ENCODE measurements at regions of chr3 and their contacts with region 1.

Region 1: GRCh38 chr3:77038468-77038929 is 1.4 kb upstream of the ROBO2 start:
- DNase-seq: peak; percentile 32 to 38
- ATAC-seq: peak; percentile 83 to 95 (median 93)
- H3K4me3 ChIP-seq: peak overlapping the region in 9 of 10 donors; percentile 14 to 57 (median 49)
- H3K27ac ChIP-seq: no peak overlapping the region
- H3K4me1 ChIP-seq: peaks cover 0 to 20% (median 10%) of the 10 kb centered on the region in 9 donors
- H3K27me3 ChIP-seq: peaks cover 10 to 67% (median 49%) of the 10 kb centered on the region in 7 donors
- CTCF ChIP-seq: peak; percentile 26 to 71 (median 59)

Region 2: GRCh38 chr3:76776927-76777326 is 261.6 kb before region 1 on chr3:
- intact Hi-C with region 1: no loop called
- DNase-seq: no peak
- ATAC-seq: no peak
- H3K4me3 ChIP-seq: no peak overlapping the region
- H3K27ac ChIP-seq: no peak overlapping the region
- H3K4me1 ChIP-seq: no peaks in the 10 kb centered on the region
- H3K27me3 ChIP-seq: no peaks in the 10 kb centered on the region
- CTCF ChIP-seq: no peak

Region 3: GRCh38 chr3:76859596-76859995 is 178.9 kb before region 1 on chr3:
- intact Hi-C with region 1: no loop called
- DNase-seq: no peak
- ATAC-seq: no peak
- H3K4me3 ChIP-seq: no peak overlapping the region
- H3K27ac ChIP-seq: no peak overlapping the region
- H3K4me1 ChIP-seq: no peaks in the 10 kb centered on the region
- H3K27me3 ChIP-seq: no peaks in the 10 kb centered on the region
- CTCF ChIP-seq: no peak

Region 4: GRCh38 chr3:77254967-77255831 is 216.7 kb after region 1 on chr3:
- intact Hi-C with region 1: loop called (anchors 1 to 10 kb)
- DNase-seq: peak in 1 of 2 donors; percentile 40
- ATAC-seq: peak in 2 of 8 donors; percentile 58 to 70
- H3K4me3 ChIP-seq: no peak overlapping the region
- H3K27ac ChIP-seq: no peak overlapping the region
- H3K4me1 ChIP-seq: no peaks in the 10 kb centered on the region
- H3K27me3 ChIP-seq: no peaks in the 10 kb centered on the region
- CTCF ChIP-seq: peak in 8 of 9 donors; percentile 40 to 75 (median 64)

Region 5: GRCh38 chr3:78204977-78205376 is 1166.5 kb after region 1 on chr3:
- intact Hi-C with region 1: loop called in 1 of 10 experiments (anchors 5 kb)
- DNase-seq: peak in 1 of 2 donors; percentile 3
- ATAC-seq: peak in 2 of 8 donors; percentile 44 to 47
- H3K4me3 ChIP-seq: no peak overlapping the region
- H3K27ac ChIP-seq: no peak overlapping the region
- H3K4me1 ChIP-seq: no peaks in the 10 kb centered on the region
- H3K27me3 ChIP-seq: no peaks in the 10 kb centered on the region
- CTCF ChIP-seq: peak in 5 of 9 donors; percentile 9 to 40 (median 34)

Region 6: DNA sequence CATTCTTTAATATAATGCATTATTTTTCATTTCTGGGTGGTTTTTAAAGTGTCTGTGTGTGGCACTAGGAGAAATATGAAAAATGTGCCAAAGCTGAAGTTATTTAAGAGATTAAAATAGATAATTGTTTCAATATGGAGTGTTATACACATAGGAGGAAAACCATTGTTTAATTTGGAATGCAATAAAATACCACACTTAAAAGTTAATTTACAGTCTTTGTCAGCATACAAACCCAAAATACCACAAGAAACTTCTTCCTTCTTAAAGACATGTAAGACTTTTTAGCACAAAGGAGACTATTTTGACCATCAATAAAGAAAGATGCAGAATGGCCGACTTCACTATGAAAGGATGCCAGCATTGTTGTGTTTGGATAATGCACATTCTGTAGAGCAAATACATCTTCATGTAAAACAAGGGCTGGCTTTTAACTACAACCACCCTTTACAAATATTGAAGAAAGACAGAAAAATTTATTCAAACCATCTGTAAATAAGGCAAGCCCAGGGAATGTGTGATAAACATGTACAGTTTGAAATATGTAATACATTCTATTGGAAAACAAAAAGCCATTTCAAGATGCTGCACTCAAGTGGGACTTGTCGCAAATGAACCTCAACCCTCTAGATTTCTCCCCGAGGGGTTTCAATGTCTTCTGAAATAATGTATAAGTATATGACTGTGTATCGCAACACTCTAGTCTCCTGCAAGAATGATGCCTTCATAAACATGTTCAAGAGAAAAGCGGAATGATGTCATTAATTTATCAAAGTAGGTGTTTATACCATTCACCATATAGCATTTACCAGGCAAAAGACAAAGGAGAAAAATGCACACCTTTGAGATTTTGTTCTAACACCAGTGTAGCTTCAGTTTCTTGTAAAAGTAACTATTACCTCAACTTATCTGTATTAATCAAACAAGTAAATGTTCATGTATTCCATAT is 1582.8 kb after region 1 on chr3:
- intact Hi-C with region 1: loop called in 1 of 10 experiments (anchors 10 kb)
- DNase-seq: no peak
- ATAC-seq: no peak
- H3K4me3 ChIP-seq: no peak overlapping the region
- H3K27ac ChIP-seq: no peak overlapping the region
- H3K4me1 ChIP-seq: no peaks in the 10 kb centered on the region
- H3K27me3 ChIP-seq: no peaks in the 10 kb centered on the region
- CTCF ChIP-seq: no peak

Region 7: DNA sequence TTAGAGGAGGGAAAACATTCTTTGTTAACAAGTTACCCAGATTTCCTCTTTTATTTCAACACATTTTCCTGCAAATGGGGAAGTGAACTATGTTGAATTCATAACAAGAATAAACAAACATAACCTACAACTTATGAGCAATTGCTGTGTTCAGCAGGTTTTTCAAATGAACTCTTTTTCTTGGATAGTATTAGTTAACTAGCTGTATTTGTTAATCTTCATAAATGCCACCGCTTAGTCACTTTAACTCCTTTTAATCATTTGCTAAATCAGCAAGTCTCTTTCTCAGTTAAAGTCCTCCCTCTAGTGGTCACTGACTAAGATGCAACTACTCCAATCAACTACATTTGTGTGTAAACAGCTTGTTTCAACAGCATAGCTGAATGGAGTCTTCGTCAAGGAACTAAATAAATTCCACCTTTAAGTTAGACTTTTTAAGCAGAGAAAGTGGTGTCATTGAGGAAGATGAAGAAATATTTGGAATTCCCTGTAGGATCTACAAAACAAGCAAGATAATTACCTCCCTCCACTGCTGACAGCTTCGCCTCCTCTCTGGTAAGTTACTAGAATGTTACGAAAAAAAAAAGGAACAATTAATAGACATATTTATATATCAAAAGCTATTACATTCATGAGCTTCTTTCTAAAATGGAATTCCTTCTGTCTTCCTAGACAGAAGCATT is 1607.3 kb after region 1 on chr3:
- intact Hi-C with region 1: loop called in 7 of 10 experiments (anchors 5 kb)
- DNase-seq: peak in 1 of 2 donors; percentile 18
- ATAC-seq: peak in 3 of 8 donors; percentile 49 to 63 (median 62)
- H3K4me3 ChIP-seq: no peak overlapping the region
- H3K27ac ChIP-seq: no peak overlapping the region
- H3K4me1 ChIP-seq: peaks cover 0 to 5% (median 0%) of the 10 kb centered on the region in 9 donors
- H3K27me3 ChIP-seq: no peaks in the 10 kb centered on the region
- CTCF ChIP-seq: peak; percentile 68 to 88 (median 83)

Measured in heart right ventricle (tissue), 16 donors.